Motor neuron (in vitro differentiated cells): ENCODE measurements at regions of chr11 and their contacts with region 1.

Region 1: DNA sequence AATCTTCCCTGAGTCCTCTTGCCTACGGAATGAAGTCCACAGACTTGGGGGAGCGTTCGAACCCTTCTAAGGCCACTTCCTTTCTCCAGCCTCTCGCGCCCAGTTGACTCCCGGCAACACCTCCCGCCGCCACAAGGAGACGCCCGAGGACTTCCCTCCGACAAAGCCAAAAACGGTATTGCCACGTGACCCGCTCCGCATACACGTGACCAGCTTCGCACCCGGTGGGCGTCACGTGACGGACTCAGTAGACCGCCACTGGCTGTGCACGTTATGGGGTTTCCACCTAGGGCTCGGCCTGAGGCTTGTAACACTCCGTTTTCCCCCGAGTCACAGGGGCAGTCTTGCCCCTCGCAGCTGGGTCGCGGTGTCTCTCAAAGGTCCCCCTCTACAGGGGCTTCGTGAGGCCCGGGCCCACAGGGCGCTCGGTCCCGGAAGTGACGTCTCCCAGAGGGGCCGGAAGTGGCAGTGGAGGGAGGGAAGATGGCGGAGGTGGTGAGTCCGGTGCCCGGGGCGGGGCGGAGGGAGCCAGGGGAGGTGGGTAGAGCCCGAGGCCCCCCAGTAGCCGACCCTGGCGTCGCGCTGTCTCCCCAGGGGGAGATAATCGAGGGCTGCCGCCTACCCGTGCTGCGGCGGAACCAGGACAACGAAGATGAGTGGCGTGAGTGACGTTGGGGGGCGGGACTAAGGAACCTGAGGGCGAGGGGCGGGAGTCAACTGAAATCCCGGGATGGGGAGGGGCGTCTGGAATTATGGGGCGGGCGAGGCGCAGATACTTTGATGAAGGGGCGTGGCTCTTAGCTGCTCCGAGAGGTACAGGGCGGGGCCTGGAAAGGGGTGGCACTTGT is at the start of gene KAT5:
- ATAC-seq: peak; percentile 77 to 92 (median 88)
- H3K4me3 ChIP-seq: peak within 1 kb of the TSS; percentile 60 to 90 (median 81)
- H3K27ac ChIP-seq: peak within 1 kb of the TSS; percentile 99
- H3K4me1 ChIP-seq: peaks cover 7 to 10% of the 10 kb centered on the region in 2 donors
- total RNA-seq, gene KAT5: 33.4 to 66.8 (median 48.6) TPM

Region 2: DNA sequence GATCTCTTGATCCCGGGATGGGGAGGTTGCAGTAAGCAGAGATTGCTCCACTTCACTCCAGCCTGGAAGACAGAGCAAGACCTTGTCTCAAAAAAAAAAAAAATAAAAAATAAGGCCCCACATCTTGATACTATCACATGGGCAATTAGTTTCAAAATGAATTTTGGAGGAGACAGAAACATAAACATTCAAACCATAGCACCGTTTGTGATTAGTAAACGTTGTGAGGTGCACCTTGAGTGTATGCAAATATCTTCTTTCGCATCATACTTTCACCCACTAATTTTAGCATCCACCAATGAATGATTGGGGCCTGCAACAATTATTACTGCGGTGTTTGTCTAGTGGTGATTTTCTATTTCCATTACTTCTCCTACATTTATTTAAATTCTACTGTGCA is 553.0 kb before region 1 on chr11:
- in situ Hi-C with region 1: no loop called
- ATAC-seq: no peak
- H3K4me3 ChIP-seq: no peak overlapping the region
- H3K27ac ChIP-seq: no peak overlapping the region
- H3K4me1 ChIP-seq: no peaks in the 10 kb centered on the region

Region 3: GRCh38 chr11:65817835-65818742 is 106.1 kb after region 1 on chr11:
- in situ Hi-C with region 1: loop called in 3 of 9 experiments (anchors 10 to 25 kb)
- ATAC-seq: peak; percentile 86 to 94 (median 89)
- H3K4me3 ChIP-seq: peak overlapping the region; percentile 39 to 79 (median 58)
- H3K27ac ChIP-seq: peak overlapping the region in 1 of 2 donors; percentile 68
- H3K4me1 ChIP-seq: peaks cover 0 to 3% of the 10 kb centered on the region in 2 donors